ENCODE measurements at regions of chr19 and their contacts with region 1.

Region 1: GRCh38 chr19:45584332-45585157 is at the start of gene OPA3:
- DNase-seq: peak; percentile 100
- H3K4me3 Mint-ChIP-seq: peak within 1 kb of the TSS; percentile 98
- H3K27ac Mint-ChIP-seq: peak within 1 kb of the TSS; percentile 99
- H3K4me1 Mint-ChIP-seq: peaks cover 13% of the 10 kb centered on the region
- H3K27me3 Mint-ChIP-seq: peaks cover 1% of the 10 kb centered on the region
- total RNA-seq, gene OPA3: 14.0 and 15.3 TPM in 2 replicates

Region 2: DNA sequence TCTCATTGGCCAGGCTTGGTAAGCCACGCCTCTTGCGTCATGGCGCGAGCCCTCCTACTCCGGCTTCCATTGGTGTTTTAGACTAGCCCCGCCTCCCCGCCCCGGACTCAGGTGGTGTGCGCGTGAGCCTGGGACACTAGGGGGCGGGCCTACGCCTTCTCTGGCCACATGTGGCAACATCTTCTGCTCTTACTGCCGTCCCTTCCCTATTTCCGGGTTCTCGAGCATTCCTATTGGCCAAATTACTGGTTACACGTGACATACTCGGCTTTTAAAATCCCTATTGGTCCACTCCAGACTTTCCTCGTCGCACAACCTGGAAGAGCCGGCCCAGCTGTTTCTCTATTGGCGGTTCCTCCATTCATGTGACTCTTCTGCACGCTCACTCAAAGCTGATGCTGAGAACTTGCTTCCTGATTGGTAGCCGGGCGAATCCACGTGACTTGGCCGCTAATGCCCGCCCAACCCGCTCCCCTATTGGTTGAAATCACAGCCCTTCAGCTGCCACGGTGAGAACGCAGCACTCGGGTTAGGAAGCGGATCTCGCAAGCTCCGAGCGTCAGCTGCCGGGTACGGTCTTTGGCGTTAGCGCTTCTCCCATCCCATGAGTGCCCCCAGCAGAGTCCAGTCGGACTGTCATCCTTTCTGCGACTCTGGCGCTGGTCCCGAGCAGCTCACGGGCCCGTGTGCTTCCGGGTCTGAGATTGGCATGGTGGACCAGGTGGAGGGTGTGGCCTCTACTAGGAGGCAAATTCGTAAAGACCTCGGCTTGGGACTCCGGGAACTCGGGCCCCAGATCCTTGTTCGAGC is 406.1 kb before region 1 on chr19 and contains the start of gene BLOC1S3:
- intact Hi-C with region 1: loop called (anchors 2 kb)
- DNase-seq: peak; percentile 100
- H3K4me3 Mint-ChIP-seq: peak within 1 kb of the TSS; percentile 88
- H3K27ac Mint-ChIP-seq: peak within 1 kb of the TSS; percentile 93
- H3K4me1 Mint-ChIP-seq: peaks cover 20% of the 10 kb centered on the region
- H3K27me3 Mint-ChIP-seq: no peaks in the 10 kb centered on the region
- total RNA-seq, gene BLOC1S3: 10.1 and 12.2 TPM in 2 replicates

Region 3: GRCh38 chr19:45613926-45614725 is 29.6 kb after region 1 on chr19:
- intact Hi-C with region 1: loop called (anchors 1 kb)
- DNase-seq: peak; percentile 77
- H3K4me3 Mint-ChIP-seq: peak overlapping the region; percentile 60
- H3K27ac Mint-ChIP-seq: peak overlapping the region; percentile 94
- H3K4me1 Mint-ChIP-seq: peaks cover 16% of the 10 kb centered on the region
- H3K27me3 Mint-ChIP-seq: no peaks in the 10 kb centered on the region

Region 4: GRCh38 chr19:45717166-45717982 is 132.8 kb after region 1 on chr19:
- intact Hi-C with region 1: loop called (anchors 1 kb)
- DNase-seq: peak; percentile 99
- H3K4me3 Mint-ChIP-seq: peak overlapping the region; percentile 88
- H3K27ac Mint-ChIP-seq: peak overlapping the region; percentile 97
- H3K4me1 Mint-ChIP-seq: peaks cover 33% of the 10 kb centered on the region
- H3K27me3 Mint-ChIP-seq: peaks cover 2% of the 10 kb centered on the region

Region 5: DNA sequence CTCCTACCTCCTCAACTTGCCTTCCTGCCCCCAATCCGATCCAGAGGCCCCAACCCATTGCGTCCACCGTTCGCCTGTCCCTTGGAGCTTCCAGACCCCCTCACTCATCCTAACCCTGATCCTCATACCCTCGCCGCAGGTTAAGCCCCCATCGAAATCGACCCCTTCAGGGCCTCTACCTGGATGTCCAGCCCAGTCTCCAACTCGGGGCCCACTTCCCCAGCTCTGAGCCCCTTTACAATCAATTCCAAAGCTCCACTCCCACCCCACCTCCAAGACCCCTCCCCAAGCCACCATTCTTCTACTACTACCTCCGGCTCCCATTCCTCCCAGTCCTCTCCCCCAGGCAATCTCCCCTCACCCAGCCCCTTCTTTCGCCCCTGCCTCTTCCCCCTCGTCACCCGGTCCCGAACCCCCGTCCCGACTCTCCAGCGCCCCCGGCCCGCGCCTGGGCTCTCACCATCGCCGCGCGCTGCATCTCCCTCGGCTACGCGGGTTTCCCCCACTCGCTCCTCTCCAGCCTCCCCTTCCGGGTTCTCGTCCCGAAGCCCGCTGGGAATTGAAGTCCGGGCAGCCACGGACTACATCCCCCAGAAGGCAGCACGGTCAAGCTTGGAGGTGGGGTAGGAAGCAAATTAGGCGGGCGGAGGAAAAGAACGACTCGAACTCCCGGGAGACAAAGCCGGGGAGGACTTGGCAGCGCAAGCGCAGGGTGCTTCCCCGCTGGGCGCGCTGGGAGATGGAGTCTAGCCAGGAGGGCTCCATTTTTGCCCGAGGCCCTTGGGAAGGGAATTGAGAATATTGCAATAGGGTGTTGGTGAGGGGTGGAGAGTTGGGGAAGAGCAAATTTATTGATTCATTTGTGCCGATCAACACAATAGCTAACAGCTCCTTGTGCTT is 146.1 kb after region 1 on chr19 and contains the start of gene FBXO46:
- intact Hi-C with region 1: loop called (anchors 1 kb)
- DNase-seq: peak; percentile 99
- H3K4me3 Mint-ChIP-seq: peak within 1 kb of the TSS; percentile 95
- H3K27ac Mint-ChIP-seq: peak within 1 kb of the TSS; percentile 88
- H3K4me1 Mint-ChIP-seq: peaks cover 25% of the 10 kb centered on the region
- H3K27me3 Mint-ChIP-seq: no peaks in the 10 kb centered on the region
- total RNA-seq, gene FBXO46: 34.2 and 34.7 TPM in 2 replicates

Measured in activated CD4-positive, alpha-beta T cell treated with anti-CD3 and anti-CD28 coated beads, Interleukin-2, amount 10 ng/mL, durations not matched to agents 24 days and 14 days (primary cell).